Activated T-helper 2 cell treated with anti-CD3 and anti-CD28 coated beads, Interferon-gamma antibody, Interleukin-2, Interleukin-4, amounts not matched to agents 10 μg/mL and 5 μg/mL and 100 μg/mL, durations not matched to agents 14 hours and 24 hours and 36 hours (primary cell): ENCODE measurements at regions of chr5 and their contacts with region 1.

Region 1: GRCh38 chr5:157159209-157159751 is 6.8 kb downstream of the GARIN3 start:
- DNase-seq: peak; percentile 14
- H3K4me3 Mint-ChIP-seq: peak overlapping the region; percentile 20
- H3K27ac Mint-ChIP-seq: peak overlapping the region; percentile 96
- H3K4me1 Mint-ChIP-seq: peaks cover 65% of the 10 kb centered on the region
- H3K27me3 Mint-ChIP-seq: no peaks in the 10 kb centered on the region

Region 2: GRCh38 chr5:157172403-157172802 is 13.1 kb after region 1 on chr5:
- intact Hi-C with region 1: loop called (anchors 1 kb)
- DNase-seq: peak; percentile 78
- H3K4me3 Mint-ChIP-seq: peak overlapping the region; percentile 73
- H3K27ac Mint-ChIP-seq: peak overlapping the region; percentile 98
- H3K4me1 Mint-ChIP-seq: peaks cover 72% of the 10 kb centered on the region
- H3K27me3 Mint-ChIP-seq: no peaks in the 10 kb centered on the region